Right cardiac atrium (tissue), 5 donors: ENCODE measurements at regions of chr11 and their contacts with region 1.

Region 1: DNA sequence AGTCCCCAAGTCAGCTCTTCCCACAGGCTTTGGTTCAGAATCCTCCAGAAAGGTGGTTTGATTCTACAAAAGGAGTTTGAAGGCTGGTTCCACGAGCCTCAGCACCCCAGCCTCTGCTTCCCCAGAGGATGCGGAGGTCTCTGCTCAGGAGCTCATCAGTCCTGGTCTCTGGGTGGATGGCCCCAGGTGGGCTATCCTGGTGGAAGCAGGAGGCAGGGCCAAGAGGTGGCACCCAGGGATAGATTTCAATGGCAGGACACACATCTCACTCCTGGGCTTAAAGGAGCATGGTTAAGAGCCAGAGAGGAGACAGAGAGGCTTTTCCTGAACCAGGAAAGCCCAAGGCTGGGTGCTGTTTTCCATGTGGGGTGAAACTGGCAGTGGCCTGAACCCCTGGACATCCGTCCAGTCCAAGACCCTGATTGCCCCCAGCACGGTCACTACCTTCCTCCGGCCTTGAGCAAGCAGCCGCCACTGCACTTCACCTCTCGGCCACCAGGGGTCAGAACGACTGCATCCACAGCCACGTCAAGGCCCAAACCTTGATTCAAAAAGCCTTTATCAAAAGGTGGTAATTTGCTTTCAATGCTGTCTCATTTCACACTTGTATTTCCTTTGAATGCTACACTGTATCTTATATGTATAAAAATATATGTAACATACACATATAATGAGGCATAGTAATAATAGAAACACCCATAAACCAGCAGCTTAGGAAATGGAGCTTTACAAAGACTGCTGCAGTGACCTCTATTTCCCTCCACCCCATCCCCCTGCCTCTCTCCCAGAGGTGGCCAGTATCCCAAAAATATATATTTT is 19.3 kb upstream of the FXYD2 start:
- DNase-seq: peak; percentile 82 to 94 (median 92)
- ATAC-seq: peak; percentile 64 to 81
- H3K4me3 ChIP-seq: no peak overlapping the region
- H3K27ac ChIP-seq: no peak overlapping the region
- H3K4me1 ChIP-seq: no peaks in the 10 kb centered on the region
- H3K27me3 ChIP-seq: no peaks in the 10 kb centered on the region

Region 2: DNA sequence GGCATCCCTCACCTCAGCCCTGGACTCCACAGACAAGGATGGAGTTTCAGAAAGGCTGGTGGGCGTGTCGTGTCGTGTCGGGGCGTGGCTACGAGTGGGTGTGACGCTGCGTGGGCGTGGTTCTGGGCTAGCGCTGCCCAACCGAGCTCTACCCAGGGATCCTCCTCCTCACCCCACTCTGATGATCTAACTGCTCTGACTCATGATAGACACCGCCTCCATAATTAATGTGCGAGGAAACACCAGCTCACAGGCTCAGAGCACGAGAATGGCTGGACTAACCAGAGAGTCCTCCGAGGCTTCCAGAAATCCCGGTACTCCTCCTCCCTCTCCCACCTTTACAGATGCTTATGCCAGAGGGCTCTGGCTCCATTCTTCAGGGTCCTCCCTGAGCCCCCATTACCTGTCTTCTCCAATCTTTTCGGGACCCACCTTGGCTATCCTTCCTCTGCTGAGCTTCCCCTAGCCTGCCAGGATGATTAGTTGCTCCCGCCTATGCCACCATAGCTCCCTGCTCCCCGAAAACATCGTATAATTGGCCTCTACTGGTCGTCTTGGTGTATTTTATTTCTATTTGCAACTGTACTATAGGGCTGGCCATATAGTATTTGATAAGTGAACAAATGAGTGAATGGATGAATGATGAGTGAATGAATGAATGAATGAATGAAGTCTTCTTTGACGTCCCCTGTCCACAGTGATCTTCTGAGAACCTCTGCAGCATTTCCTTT is 63.5 kb after region 1 on chr11:
- intact Hi-C with region 1: loop called in 1 of 4 experiments (anchors 10 kb)
- DNase-seq: peak; percentile 89 to 94 (median 92)
- ATAC-seq: peak; percentile 97 to 98
- H3K4me3 ChIP-seq: no peak overlapping the region
- H3K27ac ChIP-seq: no peak overlapping the region
- H3K4me1 ChIP-seq: no peaks in the 10 kb centered on the region
- H3K27me3 ChIP-seq: no peaks in the 10 kb centered on the region